Gastrocnemius medialis (tissue), 4 donors: ENCODE measurements at regions of chr17 and their contacts with region 1.

Region 1: GRCh38 chr17:35242805-35243560 is at the start of gene SLFN5:
- DNase-seq: peak; percentile 97
- ATAC-seq: peak; percentile 84 to 85
- H3K4me3 ChIP-seq: peak within 1 kb of the TSS; percentile 68 to 85 (median 78)
- H3K27ac ChIP-seq: peak within 1 kb of the TSS; percentile 93 to 97 (median 96)
- H3K4me1 ChIP-seq: peaks cover 40 to 47% of the 10 kb centered on the region in 2 donors
- H3K27me3 ChIP-seq: no peaks in the 10 kb centered on the region
- CTCF ChIP-seq: no peak
- POLR2A ChIP-seq: peak; percentile 97 to 99
- total RNA-seq, gene SLFN5: 25.3 to 79.3 (median 37.4) TPM

Region 2: GRCh38 chr17:35141681-35142466 is 101.1 kb before region 1 on chr17 and contains the start of gene NLE1:
- in situ Hi-C with region 1: loop called in 2 of 4 experiments (anchors 10 kb)
- intact Hi-C with region 1: loop called (anchors 1 kb)
- DNase-seq: peak; percentile 68
- ATAC-seq: peak; percentile 77 to 84
- H3K4me3 ChIP-seq: peak within 1 kb of the TSS; percentile 76 to 99 (median 88)
- H3K27ac ChIP-seq: peak within 1 kb of the TSS; percentile 12 to 49 (median 40)
- H3K4me1 ChIP-seq: peaks cover 15 to 23% of the 10 kb centered on the region in 2 donors
- H3K27me3 ChIP-seq: no peaks in the 10 kb centered on the region
- CTCF ChIP-seq: peak; percentile 82 to 97 (median 87)
- POLR2A ChIP-seq: no peak
- total RNA-seq, gene NLE1: 9.9 to 19.3 (median 11.5) TPM

Region 3: DNA sequence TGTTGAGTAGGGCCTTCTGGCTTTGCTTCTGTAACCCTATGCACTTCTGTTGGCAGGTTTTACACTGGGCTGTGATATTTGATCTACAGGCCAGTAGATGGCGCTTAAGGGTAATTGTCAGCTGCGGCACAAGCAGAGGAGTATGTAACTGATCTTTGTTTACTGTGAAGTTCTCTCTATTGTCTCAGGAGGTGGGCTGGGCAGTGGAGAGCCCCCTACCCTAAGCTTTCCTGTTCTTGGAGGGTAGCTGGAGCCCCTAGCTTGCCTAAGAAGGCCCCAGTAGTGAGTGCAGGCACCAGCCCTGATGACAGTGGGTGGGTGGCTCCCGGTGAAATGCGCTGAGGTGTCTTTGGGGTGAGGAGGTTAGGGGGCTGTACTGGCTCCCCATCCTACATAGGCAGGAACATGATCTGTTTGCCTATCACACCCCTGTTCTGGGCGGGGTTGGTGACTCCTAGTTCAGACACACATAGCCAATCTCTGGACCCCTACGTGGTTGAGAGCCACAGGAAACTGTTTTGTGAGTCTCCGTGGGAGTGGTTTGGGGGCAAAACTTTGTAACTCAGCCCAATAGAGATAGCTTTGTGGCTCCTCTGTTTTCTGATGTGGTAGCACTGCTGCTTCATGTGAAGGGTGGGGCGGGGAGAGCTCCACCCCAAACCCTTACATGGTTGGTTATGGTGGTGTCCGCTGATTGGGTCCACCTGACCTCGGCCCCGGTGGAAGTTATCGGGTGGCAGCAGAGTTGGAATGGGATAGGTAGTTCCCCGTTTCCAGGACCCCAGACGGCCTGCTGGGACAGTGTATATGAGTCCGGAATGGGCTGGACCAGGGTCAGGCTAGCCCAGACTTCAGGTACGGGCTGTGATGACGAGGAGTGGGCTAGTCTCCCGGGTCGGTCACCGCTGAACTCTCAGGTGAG is 70.1 kb after region 1 on chr17:
- in situ Hi-C with region 1: no loop called
- intact Hi-C with region 1: loop called (anchors 2 kb)
- DNase-seq: peak; percentile 53 to 58
- ATAC-seq: peak; percentile 64 to 86
- H3K4me3 ChIP-seq: peak overlapping the region; percentile 52 to 69 (median 56)
- H3K27ac ChIP-seq: peak overlapping the region; percentile 79 to 88 (median 85)
- H3K4me1 ChIP-seq: peaks cover 18 to 39% of the 10 kb centered on the region in 2 donors
- H3K27me3 ChIP-seq: no peaks in the 10 kb centered on the region
- CTCF ChIP-seq: peak; percentile 67 to 85 (median 80)
- POLR2A ChIP-seq: peak; percentile 18 to 72

Region 4: GRCh38 chr17:35390663-35391062 is 147.7 kb after region 1 on chr17:
- in situ Hi-C with region 1: no loop called
- intact Hi-C with region 1: no loop called
- DNase-seq: no peak
- ATAC-seq: no peak
- H3K4me3 ChIP-seq: no peak overlapping the region
- H3K27ac ChIP-seq: no peak overlapping the region
- H3K4me1 ChIP-seq: no peaks in the 10 kb centered on the region
- H3K27me3 ChIP-seq: no peaks in the 10 kb centered on the region
- CTCF ChIP-seq: no peak
- POLR2A ChIP-seq: no peak

Region 5: GRCh38 chr17:35540589-35541404 is 297.8 kb after region 1 on chr17:
- in situ Hi-C with region 1: no loop called
- intact Hi-C with region 1: loop called (anchors 5 kb)
- DNase-seq: peak; percentile 15 to 30
- ATAC-seq: peak in 1 of 2 donors; percentile 40
- H3K4me3 ChIP-seq: peak overlapping the region; percentile 26 to 39 (median 35)
- H3K27ac ChIP-seq: peak overlapping the region; percentile 46 to 67 (median 52)
- H3K4me1 ChIP-seq: peaks cover 0 to 17% of the 10 kb centered on the region in 2 donors
- H3K27me3 ChIP-seq: no peaks in the 10 kb centered on the region
- CTCF ChIP-seq: no peak
- POLR2A ChIP-seq: no peak

Region 6: DNA sequence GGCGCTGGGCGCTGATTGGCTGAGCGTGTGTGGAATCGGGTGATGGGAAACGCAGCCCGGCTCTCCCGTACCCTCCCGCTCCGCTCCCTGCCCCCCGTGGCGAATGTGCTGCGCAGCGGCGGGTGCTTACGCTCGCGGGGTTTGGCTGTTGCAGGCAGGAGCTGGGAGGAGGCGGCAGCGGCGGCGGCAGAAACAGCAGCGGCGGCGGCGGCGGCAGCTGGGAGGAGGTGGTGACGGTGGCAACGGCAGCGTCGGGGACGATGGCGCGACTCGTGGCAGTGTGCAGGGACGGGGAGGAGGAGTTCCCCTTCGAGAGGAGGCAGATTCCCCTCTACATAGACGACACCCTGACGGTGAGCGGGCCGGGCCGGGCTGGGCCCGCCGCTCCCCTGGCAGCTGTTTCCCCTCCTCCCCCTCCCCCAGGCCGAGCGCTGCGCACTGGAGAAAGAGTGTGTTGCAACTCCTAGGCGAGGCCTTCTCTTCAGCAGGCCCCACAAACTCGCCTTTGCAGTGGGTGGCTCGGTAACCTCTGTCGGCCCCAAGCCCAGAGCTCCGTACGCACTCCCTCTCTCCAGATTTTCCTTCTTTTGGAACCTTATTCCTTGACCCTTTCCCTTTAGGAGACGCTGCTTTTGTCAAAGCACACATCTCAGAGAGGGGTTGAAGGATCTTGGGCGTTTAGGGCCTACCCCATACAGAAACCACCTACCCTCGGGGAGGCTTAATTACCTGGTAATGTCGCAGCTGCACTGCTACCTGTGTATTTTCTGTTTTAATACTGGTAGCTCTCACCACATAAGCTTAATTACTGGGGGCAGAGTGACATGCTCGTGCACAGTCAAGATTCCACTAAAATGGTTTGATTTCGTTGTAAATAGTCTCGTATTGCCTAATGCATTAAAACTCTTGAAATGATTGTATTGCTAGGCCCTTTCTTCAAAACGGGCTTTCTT is 1302.8 kb after region 1 on chr17:
- in situ Hi-C with region 1: no loop called
- intact Hi-C with region 1: loop called (anchors 2 kb)
- DNase-seq: peak; percentile 94 to 98
- ATAC-seq: peak; percentile 77 to 82
- H3K4me3 ChIP-seq: peak overlapping the region; percentile 79 to 100 (median 94)
- H3K27ac ChIP-seq: peak overlapping the region; percentile 99 to 100 (median 100)
- H3K4me1 ChIP-seq: peaks cover 44 to 45% of the 10 kb centered on the region in 2 donors
- H3K27me3 ChIP-seq: no peaks in the 10 kb centered on the region
- CTCF ChIP-seq: peak in 1 of 5 experiments; percentile 26
- POLR2A ChIP-seq: peak; percentile 83 to 92